Caco-2 (cell line): ENCODE measurements at regions of chr12 and their contacts with region 1.

Region 1: GRCh38 chr12:106136263-106136662 is 2.5 kb downstream of the NUAK1 start:
- DNase-seq: peak; percentile 77 to 85
- H3K4me3 ChIP-seq: no peak overlapping the region
- H3K4me3 Mint-ChIP-seq: peak overlapping the region; percentile 56
- H3K27ac Mint-ChIP-seq: no peak overlapping the region
- H3K4me1 ChIP-seq: peaks cover 42% of the 10 kb centered on the region
- H3K4me1 Mint-ChIP-seq: peaks cover 64% of the 10 kb centered on the region
- H3K27me3 ChIP-seq: no peaks in the 10 kb centered on the region; the same call in 1 of the 2 replicates
- H3K27me3 Mint-ChIP-seq: peaks cover 2% of the 10 kb centered on the region
- CTCF ChIP-seq: peak; percentile 78 to 85

Region 2: GRCh38 chr12:105420659-105421240 is 715.5 kb before region 1 on chr12:
- CTCF ChIA-PET with region 1: interaction called, 10 read pairs
- POLR2A ChIA-PET with region 1: no interaction called
- intact Hi-C with region 1: loop called (anchors 1 kb)
- DNase-seq: peak; percentile 73 to 82
- H3K4me3 ChIP-seq: no peak overlapping the region
- H3K4me3 Mint-ChIP-seq: no peak overlapping the region
- H3K27ac Mint-ChIP-seq: no peak overlapping the region
- H3K4me1 ChIP-seq: 0 out of 2 replicates have a peak, but pooled peaks cover under 1% of the 10 kb centered on the region
- H3K4me1 Mint-ChIP-seq: peaks cover 22% of the 10 kb centered on the region
- H3K27me3 ChIP-seq: no peaks in the 10 kb centered on the region
- H3K27me3 Mint-ChIP-seq: no peaks in the 10 kb centered on the region
- CTCF ChIP-seq: peak; percentile 80 to 90

Region 3: GRCh38 chr12:105705765-105706164 is 430.5 kb before region 1 on chr12:
- CTCF ChIA-PET with region 1: interaction called, 3 read pairs
- POLR2A ChIA-PET with region 1: no interaction called
- intact Hi-C with region 1: loop called (anchors 1 kb)
- DNase-seq: peak in 1 of 2 experiments; percentile 40
- H3K4me3 ChIP-seq: no peak overlapping the region
- H3K4me3 Mint-ChIP-seq: no peak overlapping the region
- H3K27ac Mint-ChIP-seq: no peak overlapping the region
- H3K4me1 ChIP-seq: no peaks in the 10 kb centered on the region
- H3K4me1 Mint-ChIP-seq: no peaks in the 10 kb centered on the region
- H3K27me3 ChIP-seq: no peaks in the 10 kb centered on the region
- H3K27me3 Mint-ChIP-seq: no peaks in the 10 kb centered on the region
- CTCF ChIP-seq: peak; percentile 52 to 54

Region 4: DNA sequence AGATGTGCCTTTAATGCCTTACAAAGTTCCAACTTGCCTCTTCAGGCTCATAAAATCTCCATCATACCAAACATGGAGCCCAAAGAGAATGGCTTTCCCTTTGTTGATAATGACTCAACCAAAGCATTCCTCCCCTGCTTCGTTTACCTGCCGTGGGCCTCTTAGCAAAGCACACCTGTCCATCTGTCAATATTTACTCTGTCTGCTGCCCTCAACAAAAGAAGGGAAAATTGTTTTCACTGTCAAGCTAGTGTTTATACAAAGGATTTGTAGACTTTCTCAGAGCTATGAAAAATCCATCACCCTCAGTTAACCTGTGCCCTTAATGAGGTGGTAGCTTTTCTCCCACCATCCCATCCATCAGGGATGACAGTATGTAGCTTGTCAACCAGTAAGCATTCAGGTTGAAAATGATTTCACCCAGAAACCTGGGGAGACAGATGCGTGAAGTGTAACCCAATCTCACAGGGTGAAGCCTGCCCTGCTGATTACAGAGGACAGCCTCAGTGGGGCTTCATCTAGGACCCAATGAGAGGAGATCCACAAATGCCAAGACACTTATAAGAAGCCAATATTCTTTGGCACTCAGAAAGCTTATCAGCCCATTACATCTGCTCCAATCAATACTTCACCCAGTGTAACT is 275.6 kb before region 1 on chr12:
- CTCF ChIA-PET with region 1: interaction called, 3 read pairs
- POLR2A ChIA-PET with region 1: interaction called, 3 read pairs
- intact Hi-C with region 1: loop called (anchors 10 kb)
- DNase-seq: peak; percentile 84 to 88
- H3K4me3 ChIP-seq: no peak overlapping the region
- H3K4me3 Mint-ChIP-seq: peak overlapping the region; percentile 40
- H3K27ac Mint-ChIP-seq: peak overlapping the region; percentile 79
- H3K4me1 ChIP-seq: peaks cover 31% of the 10 kb centered on the region
- H3K4me1 Mint-ChIP-seq: peaks cover 28% of the 10 kb centered on the region
- H3K27me3 ChIP-seq: no peaks in the 10 kb centered on the region
- H3K27me3 Mint-ChIP-seq: no peaks in the 10 kb centered on the region
- CTCF ChIP-seq: no peak

Region 5: GRCh38 chr12:105954951-105955931 is 181.0 kb before region 1 on chr12:
- CTCF ChIA-PET with region 1: no interaction called
- POLR2A ChIA-PET with region 1: no interaction called
- intact Hi-C with region 1: loop called (anchors 5 kb)
- DNase-seq: peak; percentile 39 to 44
- H3K4me3 ChIP-seq: no peak overlapping the region
- H3K4me3 Mint-ChIP-seq: no peak overlapping the region
- H3K27ac Mint-ChIP-seq: peak overlapping the region; percentile 81
- H3K4me1 ChIP-seq: peaks cover 12% of the 10 kb centered on the region
- H3K4me1 Mint-ChIP-seq: peaks cover 13% of the 10 kb centered on the region
- H3K27me3 ChIP-seq: no peaks in the 10 kb centered on the region
- H3K27me3 Mint-ChIP-seq: no peaks in the 10 kb centered on the region
- CTCF ChIP-seq: no peak

Region 6: DNA sequence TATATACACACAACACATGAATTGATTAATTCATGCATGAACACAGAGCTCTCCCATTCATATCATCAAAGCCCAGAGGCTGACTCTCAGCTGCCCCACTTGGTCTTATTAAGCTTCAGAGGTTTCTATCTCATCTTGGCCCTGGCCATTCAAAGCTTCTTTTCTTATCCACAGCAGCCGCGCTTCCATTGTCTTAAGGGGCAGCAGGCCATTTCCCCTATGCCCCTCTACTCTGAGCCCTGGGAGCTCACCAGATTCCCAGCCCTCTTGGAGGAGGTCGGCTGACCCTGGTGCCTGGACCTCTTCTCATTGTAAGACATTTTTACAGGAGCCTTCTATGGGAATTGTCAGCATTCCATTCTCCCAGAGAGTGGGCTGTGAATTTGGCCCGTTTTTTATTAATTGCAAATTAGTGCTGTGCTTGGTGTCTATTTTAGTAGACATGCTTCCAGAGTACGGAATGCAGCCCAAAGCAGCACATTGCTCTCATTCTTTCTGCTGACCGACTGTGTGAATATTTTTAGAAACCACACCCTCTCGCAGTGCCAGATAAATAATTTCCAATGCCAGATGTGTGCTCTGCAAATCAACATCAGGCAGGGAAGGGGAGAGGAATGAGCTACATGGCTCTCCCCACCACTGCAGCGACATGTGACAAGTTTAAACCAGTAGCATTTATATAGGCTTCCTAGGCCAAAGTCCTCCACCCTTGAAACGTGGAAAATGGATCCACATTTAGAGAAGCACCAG is 56.0 kb before region 1 on chr12:
- CTCF ChIA-PET with region 1: no interaction called
- POLR2A ChIA-PET with region 1: no interaction called
- intact Hi-C with region 1: loop called (anchors 2 kb)
- DNase-seq: no peak
- H3K4me3 ChIP-seq: no peak overlapping the region
- H3K4me3 Mint-ChIP-seq: no peak overlapping the region
- H3K27ac Mint-ChIP-seq: peak overlapping the region; percentile 45
- H3K4me1 ChIP-seq: peaks cover 41% of the 10 kb centered on the region
- H3K4me1 Mint-ChIP-seq: peaks cover 28% of the 10 kb centered on the region
- H3K27me3 ChIP-seq: no peaks in the 10 kb centered on the region
- H3K27me3 Mint-ChIP-seq: no peaks in the 10 kb centered on the region
- CTCF ChIP-seq: no peak